GM12878 (cell line): ENCODE measurements at regions of chr12 and their contacts with region 1.

Region 1: DNA sequence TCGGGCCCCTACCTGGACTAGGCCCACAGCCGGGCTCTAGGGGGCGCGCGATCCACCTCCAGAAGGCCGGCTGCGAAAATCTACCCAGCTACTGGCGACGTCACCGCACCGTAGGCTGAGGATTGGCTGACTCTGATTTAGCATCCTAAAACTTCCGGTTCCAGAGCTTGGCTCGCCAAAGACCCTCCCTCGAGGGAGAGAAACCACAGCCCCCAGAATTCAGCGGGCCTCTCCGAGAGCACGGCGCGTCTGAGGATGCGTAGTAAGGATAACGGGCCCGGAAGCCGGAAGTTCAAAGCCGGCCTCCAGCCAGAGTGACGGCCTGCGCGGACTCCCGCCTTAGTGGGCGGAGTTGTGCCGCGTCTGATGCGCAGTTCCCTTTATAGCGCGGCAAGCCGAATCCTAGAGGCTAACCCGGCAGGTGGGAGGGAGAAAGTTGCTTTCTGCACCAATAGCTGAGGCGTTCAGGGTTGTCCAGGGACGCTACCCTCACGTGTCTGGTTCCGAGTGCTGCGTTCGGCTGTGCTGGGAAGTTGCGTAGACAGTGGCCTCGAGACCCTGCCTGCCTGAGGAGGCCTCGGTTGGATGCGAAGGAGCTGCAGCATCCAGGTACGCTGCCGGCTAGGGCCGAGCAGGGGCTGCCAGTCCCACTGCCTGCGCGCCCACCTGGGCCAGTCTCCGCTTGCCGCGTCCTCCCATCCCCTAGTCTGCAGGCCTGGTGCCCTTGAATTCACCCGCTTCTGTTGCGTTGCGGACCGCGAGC is at the start of gene COX14:
- DNase-seq: peak; percentile 99
- ATAC-seq: peak; percentile 87
- H3K4me3 ChIP-seq: peak within 1 kb of the TSS; percentile 99
- H3K27ac ChIP-seq: peak within 1 kb of the TSS; percentile 90
- H3K4me1 ChIP-seq: peaks cover 21% of the 10 kb centered on the region
- H3K27me3 ChIP-seq: no peaks in the 10 kb centered on the region
- CTCF ChIP-seq: peak; percentile 94
- EP300 ChIP-seq: no peak; a peak in 1 of 4 replicates
- POLR2A ChIP-seq: peak; percentile 99
- RAD21 ChIP-seq: peak; percentile 44; the same call in 1 of the 2 replicates
- polyA plus RNA-seq, gene COX14: 323 to 361 TPM

Region 2: DNA sequence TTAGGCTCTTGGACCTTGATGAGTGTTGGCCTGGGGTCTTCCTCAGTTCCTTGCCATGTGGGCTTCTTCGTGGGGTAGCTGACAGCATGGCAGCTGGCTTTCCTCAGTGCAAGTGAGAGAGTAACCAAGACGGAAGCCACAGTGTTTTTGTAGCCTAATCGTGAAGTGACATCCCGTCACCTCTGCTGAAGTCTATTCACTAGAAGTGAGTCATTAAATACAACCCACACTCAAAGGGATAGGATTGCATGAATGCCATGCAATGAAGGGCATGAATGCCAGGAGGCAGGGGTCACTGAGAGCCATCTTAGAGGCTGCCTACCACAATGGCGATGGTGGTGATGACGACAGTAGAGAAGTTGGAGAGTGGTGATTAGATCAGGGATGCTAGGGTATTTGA is 68.0 kb before region 1 on chr12:
- CTCF ChIA-PET with region 1: interaction called, 15 read pairs
- POLR2A ChIA-PET with region 1: no interaction called
- RAD21 ChIA-PET with region 1: interaction called, 3 read pairs
- SMC1A ChIA-PET with region 1: no interaction called
- in situ Hi-C with region 1: no loop called
- intact Hi-C with region 1: no loop called
- DNase-seq: no peak
- ATAC-seq: no peak
- H3K4me3 ChIP-seq: no peak overlapping the region
- H3K27ac ChIP-seq: no peak overlapping the region
- H3K4me1 ChIP-seq: no peaks in the 10 kb centered on the region
- H3K27me3 ChIP-seq: no peaks in the 10 kb centered on the region
- CTCF ChIP-seq: no peak
- EP300 ChIP-seq: no peak
- POLR2A ChIP-seq: no peak
- RAD21 ChIP-seq: no peak

Region 3: GRCh38 chr12:50127546-50127945 is 15.7 kb after region 1 on chr12:
- CTCF ChIA-PET with region 1: interaction called, 89 read pairs
- POLR2A ChIA-PET with region 1: interaction called, 15 read pairs
- RAD21 ChIA-PET with region 1: interaction called, 4 read pairs
- SMC1A ChIA-PET with region 1: interaction called, 16 read pairs
- in situ Hi-C with region 1: no loop called
- intact Hi-C with region 1: no loop called
- DNase-seq: no peak
- ATAC-seq: no peak
- H3K4me3 ChIP-seq: no peak overlapping the region
- H3K27ac ChIP-seq: no peak overlapping the region
- H3K4me1 ChIP-seq: peaks cover 11% of the 10 kb centered on the region; the same call in 1 of the 2 replicates
- H3K27me3 ChIP-seq: no peaks in the 10 kb centered on the region
- CTCF ChIP-seq: no peak
- EP300 ChIP-seq: no peak
- POLR2A ChIP-seq: no peak
- RAD21 ChIP-seq: no peak

Region 4: GRCh38 chr12:50167041-50167828 is 55.4 kb after region 1 on chr12 and contains the start of gene CERS5:
- CTCF ChIA-PET with region 1: interaction called, 257 read pairs
- POLR2A ChIA-PET with region 1: interaction called, 72 read pairs
- RAD21 ChIA-PET with region 1: interaction called, 48 read pairs
- SMC1A ChIA-PET with region 1: interaction called, 36 read pairs
- in situ Hi-C with region 1: no loop called
- intact Hi-C with region 1: loop called (anchors 1 kb)
- DNase-seq: peak; percentile 85
- ATAC-seq: peak; percentile 99
- H3K4me3 ChIP-seq: peak within 1 kb of the TSS; percentile 80
- H3K27ac ChIP-seq: peak within 1 kb of the TSS; percentile 71
- H3K4me1 ChIP-seq: no peaks in the 10 kb centered on the region
- H3K27me3 ChIP-seq: no peaks in the 10 kb centered on the region
- CTCF ChIP-seq: no peak
- EP300 ChIP-seq: peak in 1 of 2 experiments; percentile 22; a peak in 1 of 4 replicates
- POLR2A ChIP-seq: peak; percentile 87
- RAD21 ChIP-seq: no peak
- polyA plus RNA-seq, gene CERS5: 6.8 to 12.2 TPM

Region 5: GRCh38 chr12:50211392-50212070 is 99.7 kb after region 1 on chr12:
- CTCF ChIA-PET with region 1: interaction called, 19 read pairs
- POLR2A ChIA-PET with region 1: interaction called, 6 read pairs
- RAD21 ChIA-PET with region 1: interaction called, 6 read pairs
- SMC1A ChIA-PET with region 1: interaction called, 3 read pairs
- in situ Hi-C with region 1: no loop called
- intact Hi-C with region 1: no loop called
- DNase-seq: no peak
- ATAC-seq: peak; percentile 6; the same call in 1 of the 3 replicates
- H3K4me3 ChIP-seq: no peak overlapping the region
- H3K27ac ChIP-seq: no peak overlapping the region; the same call in 1 of the 2 replicates
- H3K4me1 ChIP-seq: peaks cover 13% of the 10 kb centered on the region
- H3K27me3 ChIP-seq: no peaks in the 10 kb centered on the region
- CTCF ChIP-seq: peak in 1 of 3 experiments; percentile 39; a peak in 2 of 6 replicates
- EP300 ChIP-seq: no peak
- POLR2A ChIP-seq: no peak
- RAD21 ChIP-seq: peak; percentile 27; the same call in 1 of the 2 replicates

Region 6: GRCh38 chr12:50314629-50315312 is 202.9 kb after region 1 on chr12:
- CTCF ChIA-PET with region 1: interaction called, 28 read pairs
- POLR2A ChIA-PET with region 1: interaction called, 4 read pairs
- RAD21 ChIA-PET with region 1: interaction called, 13 read pairs
- SMC1A ChIA-PET with region 1: interaction called, 8 read pairs
- in situ Hi-C with region 1: no loop called
- intact Hi-C with region 1: no loop called
- DNase-seq: no peak
- ATAC-seq: peak; percentile 62
- H3K4me3 ChIP-seq: no peak overlapping the region
- H3K27ac ChIP-seq: no peak overlapping the region
- H3K4me1 ChIP-seq: no peaks in the 10 kb centered on the region
- H3K27me3 ChIP-seq: no peaks in the 10 kb centered on the region
- CTCF ChIP-seq: peak; percentile 44 to 63 (median 51); a peak in 5 of 6 replicates
- EP300 ChIP-seq: no peak
- POLR2A ChIP-seq: no peak
- RAD21 ChIP-seq: peak; percentile 83